ENCODE measurements at regions of chr20 and their contacts with region 1.

Region 1: DNA sequence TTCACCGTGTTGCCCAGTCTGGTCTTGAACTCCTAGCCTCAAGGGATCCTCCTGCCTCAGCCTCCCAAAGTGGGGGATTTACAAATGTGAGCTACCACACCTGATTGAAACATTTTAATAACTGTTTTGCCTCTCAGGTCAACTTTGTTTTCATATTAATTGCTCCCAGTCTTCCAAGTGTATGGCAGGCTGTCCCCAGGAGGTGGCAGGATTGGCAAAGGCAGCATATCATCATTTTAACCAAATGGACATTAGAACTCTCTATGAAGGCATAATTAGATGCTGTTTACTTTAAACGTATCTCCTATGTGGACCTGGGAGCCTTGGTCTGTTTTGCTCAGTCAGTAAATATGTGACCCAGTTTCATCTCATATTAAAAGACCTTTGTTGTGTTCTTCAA is 59.2 kb upstream of the CSE1L start:
- DNase-seq: no peak
- ATAC-seq: no peak

Region 2: DNA sequence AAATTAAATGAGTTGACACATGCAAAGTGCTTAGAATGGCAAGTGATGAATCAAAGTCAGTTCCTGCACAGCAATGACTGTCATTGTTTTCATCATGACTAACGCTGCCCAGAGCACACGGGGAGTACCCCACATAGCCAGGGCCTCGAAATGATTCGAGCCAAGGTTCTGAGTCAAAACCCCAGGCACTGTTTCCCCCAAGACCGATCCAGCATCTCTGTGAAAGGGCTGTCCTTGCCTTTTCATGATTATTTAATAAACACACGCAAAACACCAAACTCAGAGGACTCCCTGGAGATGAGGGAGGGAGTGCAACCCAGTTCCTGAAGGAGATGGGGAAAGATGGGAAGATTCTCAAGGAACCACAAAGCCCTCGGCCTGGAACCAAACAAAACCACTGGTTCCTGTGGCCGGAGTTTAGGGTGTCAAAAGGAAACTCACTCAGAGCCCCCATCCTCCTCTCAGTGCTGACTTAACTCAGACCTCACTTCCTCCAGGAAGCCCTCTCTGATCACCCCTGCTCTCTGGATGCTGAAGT is 162.9 kb before region 1 on chr20:
- intact Hi-C with region 1: no loop called
- DNase-seq: no peak
- ATAC-seq: no peak

Region 3: GRCh38 chr20:49096203-49096730 is 109.4 kb after region 1 on chr20:
- intact Hi-C with region 1: loop called (anchors 10 kb)
- DNase-seq: no peak
- ATAC-seq: no peak

Measured in Right ventricle myocardium superior (tissue), 1 donor.